GM10248 (cell line): ENCODE measurements at regions of chr6 and their contacts with region 1.

Region 1: DNA sequence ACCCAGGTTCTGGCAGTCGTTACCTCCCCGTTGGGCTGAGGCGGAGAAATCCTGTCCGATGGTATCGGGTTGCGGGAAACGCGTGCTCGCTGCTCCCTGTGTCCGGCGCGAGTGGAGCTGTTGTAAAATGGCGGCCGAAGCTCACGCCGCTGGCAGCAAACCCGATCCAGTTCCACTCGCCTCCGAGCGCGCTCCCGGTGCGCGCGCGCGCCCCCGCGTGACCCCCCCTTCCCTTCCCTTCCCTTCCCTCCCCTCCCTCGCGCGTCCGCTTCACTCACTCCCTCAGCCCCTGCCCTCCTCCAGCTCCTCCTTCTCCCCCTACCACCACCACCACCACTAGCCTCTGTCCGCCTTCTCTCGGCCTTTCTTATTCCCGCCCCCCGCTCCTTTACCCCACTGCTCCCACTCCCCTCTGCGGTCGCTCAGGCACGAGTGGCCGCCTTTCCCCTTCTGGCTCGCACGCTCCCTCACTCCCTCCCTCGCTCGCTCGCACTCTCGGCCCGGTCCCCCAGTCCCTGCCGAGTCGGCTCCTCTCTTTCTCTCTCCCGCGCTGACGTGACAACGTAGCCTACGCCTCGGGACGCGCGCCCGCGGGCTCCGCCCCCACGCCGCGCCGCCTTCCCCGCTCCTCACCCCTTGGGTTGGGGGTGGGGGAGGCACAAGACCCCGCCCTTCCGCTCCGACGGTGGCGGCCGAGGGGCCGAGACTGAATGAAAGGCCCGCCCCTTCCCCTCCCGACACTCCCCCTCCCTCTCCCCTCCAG is at the start of gene SYNCRIP:
- DNase-seq: peak; percentile 92
- CTCF ChIP-seq: no peak

Region 2: DNA sequence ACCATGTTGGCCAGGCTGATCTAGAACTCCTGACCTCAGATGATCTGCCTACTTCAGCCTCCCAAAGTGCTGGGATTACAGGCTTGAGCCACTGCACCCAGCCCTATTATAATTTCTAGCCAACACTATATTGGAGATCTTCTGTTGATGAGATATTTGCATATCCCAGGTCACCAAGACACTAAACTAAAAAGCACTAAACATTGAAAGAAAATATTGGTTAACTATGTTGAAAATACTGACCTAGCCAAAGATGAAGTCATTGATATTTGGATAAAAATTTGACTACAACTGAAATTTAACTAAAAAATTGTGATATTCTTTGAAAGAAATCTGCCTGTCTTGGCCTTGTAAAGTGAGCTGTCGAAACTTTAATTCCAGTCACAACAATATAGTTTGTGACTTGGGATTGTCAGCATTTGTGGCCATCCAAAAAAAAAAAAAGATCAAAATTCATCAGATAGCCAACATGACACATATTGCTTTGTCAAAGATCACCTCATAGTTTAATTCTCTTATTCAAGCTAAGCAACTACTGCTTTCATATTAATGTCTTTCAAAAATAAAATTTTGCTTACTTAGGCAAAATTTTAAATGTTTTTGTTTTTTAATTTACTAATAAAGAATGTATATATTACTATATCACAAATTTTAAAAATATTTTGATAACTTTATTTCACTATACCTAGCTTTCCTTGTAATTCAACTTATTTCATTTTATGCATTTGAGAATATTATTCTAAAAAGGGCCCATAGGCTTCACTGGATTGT is 199.4 kb before region 1 on chr6:
- CTCF ChIA-PET with region 1: no interaction called
- POLR2A ChIA-PET with region 1: no interaction called
- DNase-seq: no peak
- CTCF ChIP-seq: no peak

Region 3: DNA sequence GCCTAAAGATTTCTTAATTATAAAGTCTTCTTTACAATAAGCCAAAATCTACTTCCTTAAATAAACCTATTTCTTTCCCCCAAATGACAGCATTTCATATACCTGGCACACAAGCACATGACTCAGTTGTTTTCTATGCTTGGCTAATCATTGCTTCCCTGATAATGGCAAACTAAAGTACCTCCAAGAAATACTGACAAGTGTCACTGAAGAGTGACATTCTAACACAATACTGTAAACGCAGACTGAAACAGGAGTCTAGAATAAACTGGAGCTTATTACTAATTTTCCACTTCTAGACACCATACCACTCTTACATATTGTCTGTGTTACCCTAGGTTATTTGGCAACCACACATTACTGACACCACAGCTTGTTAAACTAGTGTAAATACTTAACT is 14.6 kb before region 1 on chr6:
- CTCF ChIA-PET with region 1: interaction called, 19 read pairs
- POLR2A ChIA-PET with region 1: interaction called, 18 read pairs
- DNase-seq: no peak
- CTCF ChIP-seq: no peak

Region 4: DNA sequence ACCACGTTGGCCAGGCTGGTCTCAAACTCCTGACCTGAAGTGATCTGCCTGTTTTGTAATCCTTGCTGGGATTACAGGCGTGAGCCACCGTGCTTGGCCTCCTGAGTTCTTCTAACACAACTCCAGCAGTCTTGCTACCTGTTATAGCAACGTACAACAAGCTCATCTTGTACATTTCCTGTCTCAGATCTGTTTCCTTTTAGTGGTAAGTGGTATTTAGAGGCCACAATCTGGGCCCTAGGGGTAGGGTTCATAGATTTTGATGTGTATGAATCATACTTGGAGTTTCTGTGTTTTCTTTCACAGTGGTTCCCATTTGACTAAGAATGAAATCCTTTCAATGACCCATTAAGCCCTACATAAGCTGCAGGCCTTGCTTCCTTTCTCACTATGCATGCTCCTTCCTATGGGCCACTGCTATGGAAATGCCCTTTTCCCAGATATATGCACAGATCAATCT is 26.8 kb after region 1 on chr6:
- CTCF ChIA-PET with region 1: interaction called, 7 read pairs
- POLR2A ChIA-PET with region 1: interaction called, 254 read pairs
- DNase-seq: peak; percentile 68
- CTCF ChIP-seq: no peak

Region 5: GRCh38 chr6:86215323-86215722 is 572.4 kb after region 1 on chr6:
- CTCF ChIA-PET with region 1: no interaction called
- POLR2A ChIA-PET with region 1: no interaction called
- DNase-seq: no peak
- CTCF ChIP-seq: no peak